Posterior vena cava (tissue), 2 donors: ENCODE measurements at regions of chr19 and their contacts with region 1.

Region 1: DNA sequence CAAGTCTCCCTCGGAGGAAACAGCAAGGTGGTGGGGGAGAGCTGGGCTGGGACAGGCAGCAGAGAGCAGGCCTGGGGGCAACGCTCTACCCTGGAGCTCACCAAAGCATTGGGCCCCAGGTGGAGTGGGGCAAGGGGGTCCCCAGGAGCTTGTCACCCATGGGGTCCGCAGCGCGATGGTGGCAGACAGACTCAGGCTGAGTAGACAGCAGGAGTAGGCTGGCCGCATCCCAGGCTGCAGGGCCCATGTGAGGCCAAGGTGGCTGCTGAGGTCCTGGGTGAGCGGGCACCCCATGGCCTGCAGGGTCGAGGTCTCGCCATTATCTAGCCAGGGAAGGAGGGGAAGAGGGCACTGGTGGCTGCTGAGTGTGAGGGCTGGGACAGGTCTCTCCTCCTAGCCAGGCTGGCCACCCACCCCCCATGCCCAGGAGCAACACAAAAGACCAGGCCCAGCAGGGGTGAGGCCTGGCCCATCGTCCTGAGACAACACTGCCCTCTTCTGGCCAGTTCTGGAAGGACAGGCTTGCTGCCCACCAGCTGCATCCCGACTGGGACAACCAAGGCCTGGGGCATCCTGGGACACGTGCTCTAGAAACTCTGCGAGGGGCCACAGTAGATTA is 33.1 kb downstream of the CEBPG start:
- DNase-seq: peak; percentile 93

Region 2: GRCh38 chr19:33241530-33242101 is 165.0 kb before region 1 on chr19:
- intact Hi-C with region 1: loop called (anchors 2 kb)
- DNase-seq: no peak

Region 3: DNA sequence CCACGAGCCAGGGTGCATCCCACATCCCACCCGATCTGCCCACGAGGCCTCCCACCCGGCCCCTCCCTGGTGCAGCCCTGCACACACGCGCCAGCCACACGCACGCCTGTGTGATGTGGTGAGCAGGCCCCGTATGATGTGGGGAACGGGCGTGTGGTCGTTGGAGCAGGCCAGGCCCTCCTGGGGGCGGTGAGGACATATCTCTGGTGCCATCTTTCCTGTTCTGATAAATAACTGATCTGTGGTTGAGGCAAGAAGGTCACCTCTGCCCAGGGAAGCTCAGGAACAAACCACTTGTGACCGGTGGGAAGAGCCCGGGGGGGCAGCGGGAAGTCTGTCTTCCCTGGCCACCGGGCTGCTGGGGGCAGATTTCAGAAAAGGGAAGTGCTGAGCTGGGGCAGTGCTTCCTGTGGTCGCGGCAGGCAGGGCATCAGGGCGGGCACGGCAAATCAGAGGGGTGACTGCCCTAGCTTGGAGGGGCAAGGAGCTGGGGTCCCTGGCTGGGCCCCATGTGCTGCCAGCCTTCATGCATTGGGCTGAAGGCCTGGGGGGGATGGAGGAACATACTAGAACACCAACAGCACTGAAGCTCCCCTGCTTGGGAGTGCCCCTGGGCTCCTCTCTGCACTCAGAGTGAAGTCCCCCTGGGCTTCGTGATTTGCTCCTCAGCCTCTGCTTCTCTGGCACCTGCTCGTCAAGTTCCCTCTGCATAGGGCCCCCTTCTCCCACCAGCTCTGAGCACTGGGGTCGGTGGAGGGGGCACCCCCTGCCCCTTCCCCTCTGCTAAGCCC is 145.8 kb before region 1 on chr19:
- intact Hi-C with region 1: no loop called
- DNase-seq: no peak